ENCODE measurements at regions of chr18 and their contacts with region 1.

Region 1: DNA sequence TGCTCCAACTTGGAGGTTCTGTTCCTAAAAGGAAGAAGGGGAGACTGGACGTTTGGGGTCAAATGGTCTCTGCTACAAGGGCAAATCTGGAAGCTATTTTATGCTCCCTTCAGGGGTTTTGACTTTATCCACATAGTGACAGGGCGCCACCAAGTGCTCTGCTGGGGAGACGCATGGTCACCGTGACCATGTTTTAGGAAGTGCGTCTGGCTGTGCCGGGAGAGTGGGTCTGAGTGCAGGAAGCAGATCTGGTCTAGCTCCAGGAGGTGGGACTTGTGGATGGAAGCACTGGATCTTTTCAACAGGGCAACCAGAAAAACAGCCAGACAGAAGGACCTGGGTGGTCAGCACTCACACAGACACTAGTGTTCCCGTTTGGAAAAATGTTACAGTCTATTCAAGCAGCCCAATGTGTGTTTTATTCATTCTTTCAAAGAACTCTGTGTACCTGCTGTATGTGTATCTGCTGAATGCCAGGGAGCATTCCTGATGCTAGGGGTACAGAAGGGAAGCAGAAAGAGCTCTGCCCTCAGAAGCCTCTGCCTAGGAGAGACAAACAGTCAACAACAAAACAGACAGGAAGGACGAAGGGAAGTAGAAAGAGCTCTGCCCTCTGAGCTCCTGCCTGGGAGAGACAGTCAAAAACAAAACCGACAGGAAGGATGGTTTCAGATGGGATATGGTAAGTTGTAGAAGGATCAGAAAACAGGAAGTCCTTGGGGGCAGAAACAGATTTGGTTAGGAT is 14.3 kb downstream of the IMPA2 start:
- H3K4me3 ChIP-seq: no peak overlapping the region
- H3K27ac ChIP-seq: no peak overlapping the region
- H3K4me1 ChIP-seq: no peaks in the 10 kb centered on the region
- CTCF ChIP-seq: peak; percentile 77

Region 2: GRCh38 chr18:11733031-11733430 is 262.6 kb before region 1 on chr18:
- CTCF ChIA-PET with region 1: interaction called, 53 read pairs
- POLR2A ChIA-PET with region 1: no interaction called
- H3K4me3 ChIP-seq: no peak overlapping the region; the same call in 1 of the 2 replicates
- H3K27ac ChIP-seq: no peak overlapping the region
- H3K4me1 ChIP-seq: no peaks in the 10 kb centered on the region
- CTCF ChIP-seq: peak; percentile 91

Region 3: GRCh38 chr18:11925800-11926481 is 69.7 kb before region 1 on chr18:
- CTCF ChIA-PET with region 1: interaction called, 19 read pairs
- POLR2A ChIA-PET with region 1: no interaction called
- H3K4me3 ChIP-seq: no peak overlapping the region
- H3K27ac ChIP-seq: no peak overlapping the region
- H3K4me1 ChIP-seq: no peaks in the 10 kb centered on the region
- CTCF ChIP-seq: no peak

Region 4: GRCh38 chr18:11947214-11948191 is 48.1 kb before region 1 on chr18:
- CTCF ChIA-PET with region 1: interaction called, 19 read pairs
- POLR2A ChIA-PET with region 1: no interaction called
- H3K4me3 ChIP-seq: no peak overlapping the region
- H3K27ac ChIP-seq: no peak overlapping the region
- H3K4me1 ChIP-seq: no peaks in the 10 kb centered on the region
- CTCF ChIP-seq: no peak

Region 5: GRCh38 chr18:12005538-12006487 is 10.2 kb after region 1 on chr18:
- CTCF ChIA-PET with region 1: interaction called, 14 read pairs
- POLR2A ChIA-PET with region 1: interaction called, 3 read pairs
- H3K4me3 ChIP-seq: no peak overlapping the region
- H3K27ac ChIP-seq: no peak overlapping the region
- H3K4me1 ChIP-seq: no peaks in the 10 kb centered on the region
- CTCF ChIP-seq: no peak

Region 6: GRCh38 chr18:12038639-12039417 is 43.2 kb after region 1 on chr18:
- CTCF ChIA-PET with region 1: interaction called, 29 read pairs
- POLR2A ChIA-PET with region 1: no interaction called
- H3K4me3 ChIP-seq: peak overlapping the region; percentile 52
- H3K27ac ChIP-seq: no peak overlapping the region; the same call in 1 of the 2 replicates
- H3K4me1 ChIP-seq: no peaks in the 10 kb centered on the region; the same call in 1 of the 2 replicates
- CTCF ChIP-seq: peak; percentile 99

Measured in HEK293 (cell line).